Naive thymus-derived CD4-positive, alpha-beta T cell (primary cell): ENCODE measurements at regions of chr20 and their contacts with region 1.

Region 1: DNA sequence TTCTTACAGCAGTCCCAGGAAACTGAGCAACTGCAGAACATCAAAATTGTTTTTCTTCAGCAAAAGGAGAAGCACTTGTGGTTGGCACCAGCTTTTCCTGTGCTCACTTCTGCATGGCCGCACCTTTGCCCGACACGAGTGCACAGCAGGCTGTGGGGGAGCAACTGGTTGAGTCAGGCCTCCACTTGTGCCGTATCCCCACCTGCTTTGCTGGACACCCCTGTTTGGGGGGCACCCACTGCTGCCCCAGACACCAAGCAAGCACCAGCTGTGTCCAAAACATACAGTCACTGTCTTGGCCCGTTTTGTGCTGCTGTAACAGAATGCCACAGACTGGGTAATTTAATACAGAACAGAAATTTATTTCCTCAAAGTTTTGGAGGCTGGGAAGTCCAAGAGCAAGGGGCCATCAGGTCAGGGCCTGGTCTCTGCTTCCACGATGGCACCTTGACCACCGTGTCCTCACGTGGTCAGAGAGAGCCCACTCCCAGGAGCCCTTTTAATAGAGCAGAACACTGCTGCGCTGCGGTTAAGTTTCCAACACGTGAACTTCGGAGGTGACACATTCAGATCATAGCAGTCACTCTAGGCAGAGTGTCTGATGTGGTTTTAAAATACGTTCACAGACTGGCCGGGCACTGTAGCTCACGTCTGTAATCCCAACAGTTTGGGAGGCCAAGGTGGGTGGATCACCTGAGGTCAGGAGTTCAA is 8.7 kb upstream of the GMEB2 start:
- DNase-seq: peak in 8 of 9 donors; percentile 67 to 92 (median 89)
- ATAC-seq: peak; percentile 81
- H3K4me3 ChIP-seq: peak overlapping the region; percentile 50
- H3K4me3 Mint-ChIP-seq: peak overlapping the region; percentile 77 to 89 (median 82)
- H3K27ac ChIP-seq: peak overlapping the region; percentile 78
- H3K27ac Mint-ChIP-seq: peak overlapping the region; percentile 95 to 100 (median 98)
- H3K4me1 ChIP-seq: peaks cover 58 to 73% of the 10 kb centered on the region in 2 donors
- H3K4me1 Mint-ChIP-seq: peaks cover 24 to 78% (median 53%) of the 10 kb centered on the region in 7 donors
- H3K27me3 ChIP-seq: no peaks in the 10 kb centered on the region
- H3K27me3 Mint-ChIP-seq: no peaks in the 10 kb centered on the region

Region 2: GRCh38 chr20:63475206-63475605 is 160.4 kb before region 1 on chr20:
- CTCF ChIA-PET with region 1: no interaction called
- POLR2A ChIA-PET with region 1: no interaction called
- intact Hi-C with region 1: no loop called
- DNase-seq: no peak
- ATAC-seq: no peak
- H3K4me3 ChIP-seq: no peak overlapping the region
- H3K4me3 Mint-ChIP-seq: no peak overlapping the region
- H3K27ac ChIP-seq: no peak overlapping the region
- H3K27ac Mint-ChIP-seq: no peak overlapping the region
- H3K4me1 ChIP-seq: no peaks in the 10 kb centered on the region
- H3K4me1 Mint-ChIP-seq: peaks cover 0 to 13% (median 6%) of the 10 kb centered on the region in 7 donors
- H3K27me3 ChIP-seq: peaks cover 3 to 7% of the 10 kb centered on the region in 2 donors
- H3K27me3 Mint-ChIP-seq: peaks cover 19 to 50% (median 41%) of the 10 kb centered on the region in 5 donors

Region 3: DNA sequence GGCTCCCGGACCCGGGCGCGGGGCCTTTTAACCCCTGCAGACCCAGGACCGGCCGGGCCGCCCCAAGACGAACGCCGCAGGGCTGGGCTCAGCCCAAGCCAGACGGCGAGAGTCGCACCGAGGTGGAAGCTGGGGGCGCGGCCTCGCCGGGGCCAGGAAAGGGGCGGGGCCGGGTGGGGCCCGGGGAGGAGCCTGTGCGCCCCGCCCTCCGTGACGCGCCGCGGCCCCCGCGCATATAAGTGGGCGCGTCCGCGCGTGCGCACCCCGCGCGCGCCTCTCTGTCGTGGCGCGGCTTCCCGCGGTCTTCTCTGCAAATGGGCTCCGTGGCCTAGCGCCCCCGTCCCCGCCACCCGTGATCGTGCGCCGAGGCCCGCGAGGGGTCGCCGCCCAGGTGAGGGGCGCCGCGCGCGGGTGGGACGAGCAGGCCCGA is 115.1 kb before region 1 on chr20 and contains the start of gene PPDPF:
- CTCF ChIA-PET with region 1: no interaction called
- POLR2A ChIA-PET with region 1: interaction called, 5 read pairs
- intact Hi-C with region 1: loop called (anchors 1 to 5 kb)
- DNase-seq: peak; percentile 76 to 92 (median 84)
- ATAC-seq: peak; percentile 96
- H3K4me3 ChIP-seq: peak within 1 kb of the TSS; percentile 86
- H3K4me3 Mint-ChIP-seq: peak within 1 kb of the TSS; percentile 65 to 89 (median 81)
- H3K27ac ChIP-seq: peak within 1 kb of the TSS; percentile 88
- H3K27ac Mint-ChIP-seq: peak within 1 kb of the TSS in 7 of 9 donors; percentile 51 to 88 (median 79)
- H3K4me1 ChIP-seq: peaks cover 11 to 14% of the 10 kb centered on the region in 2 donors
- H3K4me1 Mint-ChIP-seq: peaks cover 4 to 22% (median 9%) of the 10 kb centered on the region in 7 donors
- H3K27me3 ChIP-seq: no peaks in the 10 kb centered on the region
- H3K27me3 Mint-ChIP-seq: peaks cover 0 to 7% (median 0%) of the 10 kb centered on the region in 5 donors
- total RNA-seq, gene PPDPF: 138 to 225 (median 184) TPM

Region 4: GRCh38 chr20:63580796-63581461 is 54.7 kb before region 1 on chr20:
- CTCF ChIA-PET with region 1: no interaction called
- POLR2A ChIA-PET with region 1: interaction called, 5 read pairs
- intact Hi-C with region 1: loop called (anchors 2 kb)
- DNase-seq: peak; percentile 30 to 87 (median 81)
- ATAC-seq: peak; percentile 96
- H3K4me3 ChIP-seq: no peak overlapping the region
- H3K4me3 Mint-ChIP-seq: peak overlapping the region in 1 of 10 donors; percentile 17
- H3K27ac ChIP-seq: no peak overlapping the region
- H3K27ac Mint-ChIP-seq: peak overlapping the region in 1 of 9 donors; percentile 74
- H3K4me1 ChIP-seq: peaks cover 0 to 10% of the 10 kb centered on the region in 2 donors
- H3K4me1 Mint-ChIP-seq: peaks cover 0 to 17% (median 14%) of the 10 kb centered on the region in 7 donors
- H3K27me3 ChIP-seq: no peaks in the 10 kb centered on the region
- H3K27me3 Mint-ChIP-seq: peaks cover 0 to 42% (median 0%) of the 10 kb centered on the region in 5 donors

Region 5: GRCh38 chr20:63652168-63653077 is 16.8 kb after region 1 on chr20:
- CTCF ChIA-PET with region 1: interaction called, 3 read pairs
- POLR2A ChIA-PET with region 1: interaction called, 53 read pairs
- intact Hi-C with region 1: loop called in 1 of 2 experiments (anchors 2 kb)
- DNase-seq: peak in 7 of 9 donors; percentile 37 to 56 (median 47)
- ATAC-seq: peak; percentile 60
- H3K4me3 ChIP-seq: peak overlapping the region; percentile 70
- H3K4me3 Mint-ChIP-seq: peak overlapping the region; percentile 65 to 96 (median 92)
- H3K27ac ChIP-seq: peak overlapping the region; percentile 60
- H3K27ac Mint-ChIP-seq: peak overlapping the region in 4 of 9 donors; percentile 32 to 94 (median 58)
- H3K4me1 ChIP-seq: peaks cover 10 to 21% of the 10 kb centered on the region in 2 donors
- H3K4me1 Mint-ChIP-seq: peaks cover 17 to 39% (median 28%) of the 10 kb centered on the region in 7 donors
- H3K27me3 ChIP-seq: no peaks in the 10 kb centered on the region
- H3K27me3 Mint-ChIP-seq: peaks cover 0 to 16% (median 0%) of the 10 kb centered on the region in 5 donors

Region 6: DNA sequence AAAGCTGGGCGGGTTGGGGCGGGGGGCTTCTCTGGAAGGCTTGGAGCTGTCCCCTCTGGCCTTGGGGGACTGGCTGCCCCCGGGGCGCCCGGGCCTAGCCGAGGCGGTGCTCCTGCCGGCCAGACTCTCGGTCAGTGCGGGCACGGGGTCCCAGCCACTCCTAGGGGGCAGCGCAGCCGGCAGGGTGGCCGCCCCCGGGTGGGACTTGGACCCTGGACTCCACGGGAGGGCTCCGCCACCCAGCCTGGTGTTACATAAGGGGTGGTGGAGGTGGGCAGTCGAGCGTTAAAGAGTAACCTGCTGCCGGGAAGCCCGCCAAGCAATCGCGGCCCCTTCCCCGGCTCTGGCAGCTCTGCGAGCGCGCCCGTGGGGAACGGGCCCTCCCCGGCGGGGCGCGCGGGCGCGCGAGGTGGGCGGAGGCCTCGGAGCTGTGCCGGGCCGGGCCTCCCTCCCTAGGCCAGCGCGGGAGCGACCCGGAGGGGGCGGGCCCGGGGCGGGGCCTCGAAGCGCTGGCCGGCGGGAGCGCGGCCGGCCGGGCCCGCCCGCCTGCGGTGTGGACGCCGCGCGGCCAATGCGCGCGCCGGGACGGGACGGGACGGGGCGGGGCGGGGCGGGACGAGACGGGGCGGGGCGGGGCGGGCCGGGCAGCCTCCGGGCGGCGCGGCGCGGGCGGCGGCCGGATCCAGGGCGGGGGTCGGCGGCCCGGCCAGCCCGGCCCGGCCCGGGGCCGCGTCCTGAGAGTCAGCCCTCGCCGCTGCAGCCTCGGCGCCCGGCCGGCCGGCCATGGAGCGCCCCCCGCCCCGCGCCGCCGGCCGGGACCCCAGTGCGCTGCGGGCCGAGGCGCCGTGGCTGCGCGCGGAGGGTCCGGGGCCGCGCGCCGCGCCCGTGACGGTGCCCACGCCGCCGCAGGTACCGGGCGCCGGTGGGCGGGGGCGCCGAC is 103.8 kb after region 1 on chr20 and contains the start of gene SLC2A4RG:
- CTCF ChIA-PET with region 1: no interaction called
- POLR2A ChIA-PET with region 1: interaction called, 17 read pairs
- intact Hi-C with region 1: loop called in 1 of 2 experiments (anchors 5 kb)
- DNase-seq: peak; percentile 49 to 86 (median 69)
- ATAC-seq: peak; percentile 62
- H3K4me3 ChIP-seq: peak within 1 kb of the TSS; percentile 99
- H3K4me3 Mint-ChIP-seq: peak within 1 kb of the TSS; percentile 33 to 92 (median 80)
- H3K27ac ChIP-seq: peak within 1 kb of the TSS; percentile 71
- H3K27ac Mint-ChIP-seq: peak within 1 kb of the TSS in 1 of 9 donors; percentile 38
- H3K4me1 ChIP-seq: peaks cover 21 to 29% of the 10 kb centered on the region in 2 donors
- H3K4me1 Mint-ChIP-seq: peaks cover 7 to 20% (median 16%) of the 10 kb centered on the region in 7 donors
- H3K27me3 ChIP-seq: no peaks in the 10 kb centered on the region
- H3K27me3 Mint-ChIP-seq: no peaks in the 10 kb centered on the region
- total RNA-seq, gene SLC2A4RG: 88.7 to 136 (median 111) TPM